ENCODE measurements at regions of chr17 and their contacts with region 1.

Region 1: GRCh38 chr17:75652915-75653549 is 13.9 kb downstream of the RECQL5 start:
- DNase-seq: peak; percentile 63
- H3K4me3 Mint-ChIP-seq: no peak overlapping the region
- H3K27ac Mint-ChIP-seq: no peak overlapping the region
- H3K4me1 Mint-ChIP-seq: no peaks in the 10 kb centered on the region
- H3K27me3 Mint-ChIP-seq: no peaks in the 10 kb centered on the region
- CTCF ChIP-seq: peak; percentile 87

Region 2: GRCh38 chr17:75667021-75667790 is 14.2 kb after region 1 on chr17 and contains the starts of genes RECQL5 and SAP30BP:
- CTCF ChIA-PET with region 1: interaction called, 12 read pairs
- intact Hi-C with region 1: no loop called
- DNase-seq: peak; percentile 97
- H3K4me3 Mint-ChIP-seq: no peak within 1 kb of the TSS
- H3K27ac Mint-ChIP-seq: peak within 1 kb of the TSS; percentile 80
- H3K4me1 Mint-ChIP-seq: peaks cover 9% of the 10 kb centered on the region
- H3K27me3 Mint-ChIP-seq: no peaks in the 10 kb centered on the region
- CTCF ChIP-seq: no peak
- total RNA-seq, gene RECQL5: 71.3 and 87.3 TPM in 2 replicates
- total RNA-seq, gene SAP30BP: 96.4 and 98.4 TPM in 2 replicates